Activated CD4-positive, alpha-beta T cell treated with anti-CD3 and anti-CD28 coated beads for 36 hours (primary cell): ENCODE measurements at regions of chr14 and their contacts with region 1.

Region 1: GRCh38 chr14:55430024-55430690 is 10.3 kb downstream of the TBPL2 start:
- DNase-seq: peak; percentile 54
- ATAC-seq: peak; percentile 93
- H3K4me3 Mint-ChIP-seq: no peak overlapping the region
- H3K27ac Mint-ChIP-seq: peak overlapping the region; percentile 65
- H3K4me1 Mint-ChIP-seq: peaks cover 30% of the 10 kb centered on the region
- H3K27me3 Mint-ChIP-seq: no peaks in the 10 kb centered on the region

Region 2: DNA sequence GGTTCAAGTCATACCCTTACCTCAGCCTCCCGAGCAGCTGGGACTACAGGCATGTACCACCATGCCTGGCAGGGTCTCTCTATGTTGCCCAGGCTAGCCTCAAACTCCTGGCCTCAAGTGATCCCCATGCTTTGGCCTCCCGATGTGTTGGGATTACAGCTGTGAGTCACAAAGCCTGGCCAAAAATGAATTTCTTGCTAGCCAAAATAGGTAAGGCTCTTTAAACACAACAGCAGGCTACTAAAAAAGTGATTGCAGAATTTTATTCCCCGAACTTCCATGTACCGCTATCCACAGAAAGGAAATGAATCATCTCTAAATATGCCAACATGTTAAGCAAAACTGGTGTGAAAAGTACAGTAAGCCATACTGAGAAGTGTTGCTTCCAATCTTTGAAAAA is 453.8 kb before region 1 on chr14:
- CTCF ChIA-PET with region 1: no interaction called
- POLR2A ChIA-PET with region 1: no interaction called
- intact Hi-C with region 1: no loop called
- DNase-seq: no peak
- ATAC-seq: no peak
- H3K4me3 Mint-ChIP-seq: no peak overlapping the region
- H3K27ac Mint-ChIP-seq: no peak overlapping the region
- H3K4me1 Mint-ChIP-seq: peaks cover 3% of the 10 kb centered on the region
- H3K27me3 Mint-ChIP-seq: no peaks in the 10 kb centered on the region

Region 3: DNA sequence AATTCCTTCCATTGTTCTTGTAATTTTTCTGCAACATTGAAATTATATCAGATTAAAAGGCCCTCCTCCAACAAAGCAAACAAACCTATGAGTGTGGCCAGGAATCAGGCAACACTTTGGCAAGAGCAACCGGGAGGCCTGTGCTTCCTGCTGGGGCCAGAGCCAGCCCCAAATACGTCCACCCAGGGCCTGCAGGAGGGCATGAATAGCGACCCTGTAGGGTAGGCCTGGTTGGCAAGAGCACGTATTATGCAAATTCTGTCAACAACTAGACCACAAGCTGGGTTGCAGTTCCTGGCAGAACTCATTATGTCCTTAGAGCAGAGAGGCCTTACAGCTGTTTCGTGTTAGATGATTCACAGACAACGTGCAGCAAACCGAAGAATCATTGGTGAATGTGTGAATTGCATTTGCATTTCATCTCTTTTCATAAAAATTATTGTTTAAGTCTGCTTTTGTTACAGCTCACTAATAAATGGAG is 328.0 kb before region 1 on chr14:
- CTCF ChIA-PET with region 1: no interaction called
- POLR2A ChIA-PET with region 1: no interaction called
- intact Hi-C with region 1: loop called in 1 of 2 experiments (anchors 5 kb)
- DNase-seq: peak; percentile 72
- ATAC-seq: peak; percentile 62
- H3K4me3 Mint-ChIP-seq: peak overlapping the region; percentile 49
- H3K27ac Mint-ChIP-seq: peak overlapping the region; percentile 89
- H3K4me1 Mint-ChIP-seq: peaks cover 43% of the 10 kb centered on the region
- H3K27me3 Mint-ChIP-seq: no peaks in the 10 kb centered on the region

Region 4: DNA sequence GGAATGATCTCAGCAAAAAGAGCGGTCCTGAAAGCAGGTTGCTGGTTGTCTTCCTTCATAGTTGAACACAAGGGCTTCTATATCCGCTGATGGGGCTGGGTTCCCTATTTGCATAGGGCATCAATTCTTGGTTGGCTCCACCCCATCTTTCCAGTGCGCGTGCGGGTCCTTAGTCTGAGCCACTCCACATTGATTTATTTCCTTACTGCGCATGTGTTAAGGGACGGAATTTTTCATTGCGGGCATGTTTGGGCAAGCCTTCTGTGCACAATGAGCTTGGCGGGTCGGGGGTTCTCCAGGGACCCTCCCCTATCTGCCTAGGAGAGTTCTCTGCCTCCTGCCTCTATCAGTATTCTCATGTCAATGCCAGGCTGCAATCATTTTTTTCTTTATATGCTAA is 217.5 kb before region 1 on chr14:
- CTCF ChIA-PET with region 1: interaction called, 9 read pairs
- POLR2A ChIA-PET with region 1: no interaction called
- intact Hi-C with region 1: loop called (anchors 1 kb)
- DNase-seq: no peak
- ATAC-seq: no peak
- H3K4me3 Mint-ChIP-seq: no peak overlapping the region
- H3K27ac Mint-ChIP-seq: no peak overlapping the region
- H3K4me1 Mint-ChIP-seq: peaks cover 4% of the 10 kb centered on the region
- H3K27me3 Mint-ChIP-seq: no peaks in the 10 kb centered on the region

Region 5: GRCh38 chr14:55245657-55246268 is 184.4 kb before region 1 on chr14:
- CTCF ChIA-PET with region 1: interaction called, 3 read pairs
- POLR2A ChIA-PET with region 1: no interaction called
- intact Hi-C with region 1: loop called (anchors 1 kb)
- DNase-seq: peak; percentile 37
- ATAC-seq: peak; percentile 65
- H3K4me3 Mint-ChIP-seq: no peak overlapping the region
- H3K27ac Mint-ChIP-seq: no peak overlapping the region
- H3K4me1 Mint-ChIP-seq: no peaks in the 10 kb centered on the region
- H3K27me3 Mint-ChIP-seq: peaks cover 4% of the 10 kb centered on the region

Region 6: DNA sequence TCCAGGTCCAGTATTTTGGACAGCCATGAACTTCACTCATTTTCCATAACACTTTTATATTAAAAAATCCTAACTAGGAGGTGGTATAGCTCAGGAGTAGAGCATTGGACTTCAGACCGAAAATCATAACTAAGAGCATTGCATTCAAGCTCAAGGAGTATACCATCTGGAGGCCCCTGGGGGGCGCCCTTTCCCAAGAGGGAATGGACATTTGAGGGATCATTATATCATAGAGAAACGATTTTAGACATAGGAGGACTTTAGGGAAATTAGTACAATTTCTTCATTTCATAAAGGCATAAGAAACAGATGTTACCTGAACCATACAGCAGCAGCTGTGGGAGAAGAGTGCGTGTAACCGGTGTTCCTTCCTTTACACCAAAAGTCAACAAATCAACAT is 13.3 kb before region 1 on chr14:
- CTCF ChIA-PET with region 1: interaction called, 19 read pairs
- POLR2A ChIA-PET with region 1: no interaction called
- intact Hi-C with region 1: no loop called
- DNase-seq: peak; percentile 66
- ATAC-seq: peak; percentile 67
- H3K4me3 Mint-ChIP-seq: no peak overlapping the region
- H3K27ac Mint-ChIP-seq: no peak overlapping the region
- H3K4me1 Mint-ChIP-seq: peaks cover 7% of the 10 kb centered on the region
- H3K27me3 Mint-ChIP-seq: no peaks in the 10 kb centered on the region